Colonic mucosa (tissue), 4 donors: ENCODE measurements at regions of chr1 and their contacts with region 1.

Region 1: GRCh38 chr1:152533327-152533938 is 19.2 kb downstream of the CRCT1 start:
- DNase-seq: peak; percentile 52
- H3K4me3 ChIP-seq: no peak overlapping the region
- H3K27ac ChIP-seq: no peak overlapping the region
- H3K4me1 ChIP-seq: no peaks in the 10 kb centered on the region
- H3K27me3 ChIP-seq: no peaks in the 10 kb centered on the region
- CTCF ChIP-seq: peak; percentile 63

Region 2: GRCh38 chr1:152495066-152495675 is 38.3 kb before region 1 on chr1:
- intact Hi-C with region 1: loop called (anchors 5 kb)
- DNase-seq: peak; percentile 60
- H3K4me3 ChIP-seq: no peak overlapping the region
- H3K27ac ChIP-seq: no peak overlapping the region
- H3K4me1 ChIP-seq: no peaks in the 10 kb centered on the region
- H3K27me3 ChIP-seq: no peaks in the 10 kb centered on the region
- CTCF ChIP-seq: peak; percentile 55